Natural killer cell (primary cell): ENCODE measurements at regions of chr6 and their contacts with region 1.

Region 1: DNA sequence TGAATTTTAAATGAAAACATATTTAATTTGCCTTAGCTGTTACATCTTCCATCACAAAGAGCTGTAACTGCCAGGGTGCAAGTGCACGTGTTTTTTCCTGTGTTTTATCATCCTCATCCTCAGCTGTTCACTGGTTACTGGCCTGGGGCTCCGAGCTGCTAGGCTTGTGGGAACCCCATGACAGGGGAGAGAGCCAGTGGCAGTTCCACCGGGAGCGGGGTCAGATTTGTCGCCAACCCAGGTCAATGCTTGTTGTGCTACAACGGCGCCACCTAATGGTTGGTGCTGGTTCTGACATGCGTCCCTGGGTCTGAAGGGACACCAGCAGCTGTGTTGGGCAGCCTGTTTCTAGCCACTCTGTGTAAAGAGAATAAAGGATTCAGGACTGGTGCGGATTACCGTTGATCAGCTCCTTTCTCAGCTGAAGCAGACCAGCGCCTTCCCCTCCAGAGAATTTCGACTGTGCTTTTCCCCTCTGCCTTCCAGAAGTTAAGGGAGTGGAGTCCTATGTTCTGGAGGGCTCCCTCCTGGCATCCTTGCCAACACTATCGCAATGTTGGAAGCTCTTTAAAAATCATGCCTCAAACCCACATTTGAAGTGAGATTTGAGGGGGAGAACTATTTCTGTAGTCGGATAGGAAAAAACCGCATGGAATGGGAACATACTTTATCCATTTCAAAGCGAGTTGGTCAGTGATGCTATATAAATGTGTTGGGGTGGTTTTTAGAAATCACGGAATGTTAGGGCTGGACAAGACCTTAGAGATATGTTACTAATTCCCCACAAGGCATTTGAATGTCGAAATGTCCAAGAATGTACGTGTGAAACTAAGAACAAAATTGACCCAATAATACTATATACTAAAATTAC is 32.1 kb downstream of the SUMO4 start:
- DNase-seq: peak; percentile 82 to 92
- ATAC-seq: peak; percentile 83 to 98 (median 95)
- H3K4me3 ChIP-seq: no peak overlapping the region
- H3K4me3 Mint-ChIP-seq: no peak overlapping the region
- H3K27ac ChIP-seq: no peak overlapping the region
- H3K27ac Mint-ChIP-seq: no peak overlapping the region
- H3K4me1 ChIP-seq: peaks cover 4% of the 10 kb centered on the region
- H3K4me1 Mint-ChIP-seq: peaks cover 0 to 7% of the 10 kb centered on the region in 2 donors
- H3K27me3 ChIP-seq: no peaks in the 10 kb centered on the region
- H3K27me3 Mint-ChIP-seq: no peaks in the 10 kb centered on the region
- CTCF ChIP-seq: peak; percentile 95

Region 2: GRCh38 chr6:148559848-148560433 is 872.2 kb before region 1 on chr6:
- intact Hi-C with region 1: loop called (anchors 5 kb)
- DNase-seq: peak; percentile 71 to 83
- ATAC-seq: peak; percentile 87 to 93 (median 92)
- H3K4me3 ChIP-seq: no peak overlapping the region
- H3K4me3 Mint-ChIP-seq: no peak overlapping the region
- H3K27ac ChIP-seq: no peak overlapping the region
- H3K27ac Mint-ChIP-seq: no peak overlapping the region
- H3K4me1 ChIP-seq: peaks cover 25% of the 10 kb centered on the region
- H3K4me1 Mint-ChIP-seq: peaks cover 9 to 15% of the 10 kb centered on the region in 2 donors
- H3K27me3 ChIP-seq: peaks cover 30% of the 10 kb centered on the region
- H3K27me3 Mint-ChIP-seq: peaks cover 41 to 78% of the 10 kb centered on the region in 2 donors
- CTCF ChIP-seq: peak; percentile 98

Region 3: GRCh38 chr6:149028767-149029405 is 403.3 kb before region 1 on chr6:
- intact Hi-C with region 1: loop called (anchors 1 kb)
- DNase-seq: peak; percentile 34 to 92
- ATAC-seq: peak; percentile 70 to 79 (median 71)
- H3K4me3 ChIP-seq: no peak overlapping the region
- H3K4me3 Mint-ChIP-seq: no peak overlapping the region
- H3K27ac ChIP-seq: no peak overlapping the region
- H3K27ac Mint-ChIP-seq: no peak overlapping the region
- H3K4me1 ChIP-seq: peaks cover 15% of the 10 kb centered on the region
- H3K4me1 Mint-ChIP-seq: peaks cover 5 to 11% of the 10 kb centered on the region in 2 donors
- H3K27me3 ChIP-seq: no peaks in the 10 kb centered on the region
- H3K27me3 Mint-ChIP-seq: no peaks in the 10 kb centered on the region
- CTCF ChIP-seq: peak; percentile 86

Region 4: GRCh38 chr6:149082286-149082707 is 349.8 kb before region 1 on chr6:
- intact Hi-C with region 1: loop called (anchors 1 kb)
- DNase-seq: peak; percentile 46 to 90
- ATAC-seq: peak; percentile 65 to 82 (median 81)
- H3K4me3 ChIP-seq: no peak overlapping the region
- H3K4me3 Mint-ChIP-seq: no peak overlapping the region
- H3K27ac ChIP-seq: no peak overlapping the region
- H3K27ac Mint-ChIP-seq: no peak overlapping the region
- H3K4me1 ChIP-seq: no peaks in the 10 kb centered on the region
- H3K4me1 Mint-ChIP-seq: peaks cover 0 to 4% of the 10 kb centered on the region in 2 donors
- H3K27me3 ChIP-seq: no peaks in the 10 kb centered on the region
- H3K27me3 Mint-ChIP-seq: no peaks in the 10 kb centered on the region
- CTCF ChIP-seq: peak; percentile 78

Region 5: DNA sequence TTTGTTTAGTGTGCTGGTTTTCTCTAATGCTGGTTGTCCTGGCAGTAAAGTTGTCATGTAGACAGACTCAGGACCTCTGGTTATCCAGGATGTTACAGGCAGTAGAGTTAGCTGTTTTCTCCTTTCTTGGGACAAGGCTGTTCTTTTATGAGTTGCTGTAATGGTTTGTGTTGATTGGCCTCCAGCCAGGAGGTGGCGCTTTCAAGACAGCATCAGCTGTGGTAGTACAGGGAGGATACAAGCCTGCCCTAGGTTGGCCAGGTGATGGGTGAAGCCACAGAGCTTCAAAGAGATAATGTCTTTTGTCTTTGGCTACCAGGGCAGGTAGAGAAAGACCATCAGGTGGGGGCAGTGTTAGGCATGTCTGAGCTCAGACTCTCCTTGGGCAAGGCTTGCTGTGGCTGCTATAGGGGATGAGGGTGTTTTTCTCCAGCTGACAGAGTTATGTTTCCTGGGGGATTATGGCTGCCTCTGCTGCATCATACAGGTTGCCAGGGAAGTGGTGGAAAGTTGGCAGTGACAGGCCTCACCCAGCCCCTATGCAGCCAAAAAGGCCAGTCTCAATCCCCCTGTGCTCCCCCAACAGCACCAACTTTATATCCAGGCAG is 241.8 kb before region 1 on chr6:
- intact Hi-C with region 1: loop called (anchors 2 kb)
- DNase-seq: peak in 1 of 2 donors; percentile 61
- ATAC-seq: peak in 1 of 3 donors; percentile 36
- H3K4me3 ChIP-seq: no peak overlapping the region
- H3K4me3 Mint-ChIP-seq: no peak overlapping the region
- H3K27ac ChIP-seq: no peak overlapping the region
- H3K27ac Mint-ChIP-seq: no peak overlapping the region
- H3K4me1 ChIP-seq: no peaks in the 10 kb centered on the region
- H3K4me1 Mint-ChIP-seq: no peaks in the 10 kb centered on the region
- H3K27me3 ChIP-seq: no peaks in the 10 kb centered on the region
- H3K27me3 Mint-ChIP-seq: peaks cover 0 to 2% of the 10 kb centered on the region in 2 donors
- CTCF ChIP-seq: no peak

Region 6: DNA sequence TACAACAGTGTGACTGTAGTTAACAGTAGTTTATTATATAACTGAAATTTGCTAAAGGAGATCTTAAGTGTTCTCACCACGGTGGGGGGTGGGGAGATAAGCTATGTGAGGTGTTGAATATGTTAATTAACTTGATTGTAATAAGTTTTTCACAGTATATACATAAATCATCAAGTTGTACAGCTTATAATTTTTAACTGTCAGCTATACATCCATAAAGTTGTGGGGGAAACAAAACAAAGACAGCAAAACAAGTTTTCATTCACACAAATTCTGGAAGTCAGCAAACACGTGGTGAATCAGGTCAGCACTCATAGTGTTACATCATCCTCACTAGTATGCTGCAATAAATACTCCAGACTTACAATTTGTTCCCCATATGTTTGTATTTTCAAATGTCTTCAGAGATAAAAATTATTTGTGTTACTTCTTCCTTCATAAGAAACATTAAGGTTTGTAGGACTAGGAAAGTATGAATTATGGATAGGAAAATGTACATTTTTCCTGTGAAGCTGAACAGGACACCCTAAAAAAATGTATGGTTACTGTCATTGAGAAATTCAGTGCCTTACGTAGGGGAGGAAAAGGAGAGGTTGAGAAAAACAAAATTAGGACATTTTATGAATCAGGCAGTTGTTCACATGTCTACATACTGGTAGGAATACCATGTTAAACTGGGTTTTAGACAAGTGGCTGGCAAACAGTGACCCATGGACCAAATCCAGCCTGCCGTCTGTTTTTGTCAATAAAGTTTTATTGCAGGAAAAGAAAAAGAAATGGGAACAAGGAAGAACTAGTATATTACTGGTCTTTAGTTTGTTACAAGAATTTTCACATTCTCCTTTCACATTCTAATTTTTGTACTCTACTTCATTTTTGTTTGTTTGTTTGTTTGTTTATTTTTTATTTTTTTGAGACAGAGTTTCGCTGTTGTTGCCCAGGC is 26.0 kb before region 1 on chr6:
- intact Hi-C with region 1: no loop called
- DNase-seq: no peak
- ATAC-seq: peak in 1 of 3 donors; percentile 21
- H3K4me3 ChIP-seq: no peak overlapping the region
- H3K4me3 Mint-ChIP-seq: no peak overlapping the region
- H3K27ac ChIP-seq: no peak overlapping the region
- H3K27ac Mint-ChIP-seq: peak overlapping the region; percentile 32 to 70
- H3K4me1 ChIP-seq: no peaks in the 10 kb centered on the region
- H3K4me1 Mint-ChIP-seq: peaks cover 8 to 12% of the 10 kb centered on the region in 2 donors
- H3K27me3 ChIP-seq: no peaks in the 10 kb centered on the region
- H3K27me3 Mint-ChIP-seq: no peaks in the 10 kb centered on the region
- CTCF ChIP-seq: no peak

Region 7: DNA sequence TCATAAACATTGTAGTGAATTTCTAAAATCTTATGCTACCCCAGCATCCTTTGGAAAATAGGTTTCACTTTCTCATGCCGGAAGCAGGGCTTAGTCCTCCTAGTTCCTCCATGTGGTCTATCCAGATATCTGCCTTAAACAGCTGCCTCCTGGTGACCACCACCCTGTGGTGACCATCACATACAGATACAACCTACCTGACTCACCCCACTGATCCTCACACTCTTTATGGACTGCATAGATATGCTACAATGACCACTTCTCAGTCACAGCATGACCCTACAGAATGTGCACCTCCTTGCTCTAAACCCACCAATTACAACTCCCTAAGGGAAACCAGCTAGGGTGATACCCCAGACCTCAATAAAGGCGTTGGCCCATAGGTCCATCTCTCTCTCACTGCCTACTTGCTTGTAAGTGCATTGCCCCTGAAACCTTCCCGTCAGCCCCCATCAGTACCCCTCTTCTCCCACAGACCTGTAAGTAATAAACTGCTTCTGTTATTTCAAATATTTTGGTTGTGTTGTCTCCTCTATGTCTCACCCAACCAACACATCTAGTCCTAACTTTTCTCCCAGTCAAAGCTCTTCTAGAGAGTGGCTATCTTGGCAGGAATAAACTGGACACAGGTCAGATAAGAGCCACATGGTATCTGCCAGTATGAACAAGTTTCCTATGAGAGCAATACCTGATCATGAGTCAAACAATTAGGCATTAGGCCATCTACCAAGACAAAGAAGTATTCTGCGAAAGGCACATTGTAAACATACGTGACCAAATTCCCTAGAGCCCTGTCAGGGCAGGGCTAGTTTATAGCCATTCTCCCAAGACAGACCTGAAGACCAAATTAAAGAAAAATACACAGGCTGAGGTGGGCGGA is 1128.1 kb after region 1 on chr6:
- intact Hi-C with region 1: no loop called
- DNase-seq: no peak
- ATAC-seq: no peak
- H3K4me3 ChIP-seq: no peak overlapping the region
- H3K4me3 Mint-ChIP-seq: no peak overlapping the region
- H3K27ac ChIP-seq: no peak overlapping the region
- H3K27ac Mint-ChIP-seq: no peak overlapping the region
- H3K4me1 ChIP-seq: no peaks in the 10 kb centered on the region
- H3K4me1 Mint-ChIP-seq: no peaks in the 10 kb centered on the region
- H3K27me3 ChIP-seq: peaks cover 4% of the 10 kb centered on the region
- H3K27me3 Mint-ChIP-seq: peaks cover 8 to 15% of the 10 kb centered on the region in 2 donors
- CTCF ChIP-seq: no peak